AG04449 (cell line): ENCODE measurements at regions of chr11 and their contacts with region 1.

Region 1: GRCh38 chr11:64448599-64449556 is 89.9 kb downstream of the RPS6KA4 start:
- DNase-seq: no peak
- H3K4me3 ChIP-seq: peak overlapping the region; percentile 36
- CTCF ChIP-seq: peak; percentile 97

Region 2: GRCh38 chr11:64120951-64121569 is 327.8 kb before region 1 on chr11:
- CTCF ChIA-PET with region 1: no interaction called
- POLR2A ChIA-PET with region 1: no interaction called
- DNase-seq: peak; percentile 4
- H3K4me3 ChIP-seq: no peak overlapping the region
- CTCF ChIP-seq: no peak

Region 3: DNA sequence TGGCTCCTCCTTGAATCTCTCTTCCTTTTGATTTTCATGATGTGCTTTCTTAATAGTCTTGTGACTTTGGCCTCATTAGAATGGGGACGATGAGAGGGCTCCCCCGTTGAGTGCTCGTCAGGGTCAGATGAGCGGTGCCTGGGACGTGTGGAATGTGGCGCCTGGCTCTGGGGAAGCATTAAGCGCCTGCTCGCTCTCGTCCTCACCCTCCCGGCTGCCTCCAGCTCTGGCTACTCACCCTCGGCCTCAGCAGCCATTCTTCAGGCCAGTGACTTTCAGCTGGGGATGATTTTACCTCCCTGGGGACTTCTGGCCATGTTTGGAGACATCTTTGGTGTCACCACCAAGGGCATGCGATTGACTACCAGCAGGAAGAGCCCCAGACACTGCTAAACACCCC is 20.2 kb before region 1 on chr11:
- CTCF ChIA-PET with region 1: interaction called, 25 read pairs
- POLR2A ChIA-PET with region 1: no interaction called
- DNase-seq: no peak
- H3K4me3 ChIP-seq: no peak overlapping the region
- CTCF ChIP-seq: no peak

Region 4: DNA sequence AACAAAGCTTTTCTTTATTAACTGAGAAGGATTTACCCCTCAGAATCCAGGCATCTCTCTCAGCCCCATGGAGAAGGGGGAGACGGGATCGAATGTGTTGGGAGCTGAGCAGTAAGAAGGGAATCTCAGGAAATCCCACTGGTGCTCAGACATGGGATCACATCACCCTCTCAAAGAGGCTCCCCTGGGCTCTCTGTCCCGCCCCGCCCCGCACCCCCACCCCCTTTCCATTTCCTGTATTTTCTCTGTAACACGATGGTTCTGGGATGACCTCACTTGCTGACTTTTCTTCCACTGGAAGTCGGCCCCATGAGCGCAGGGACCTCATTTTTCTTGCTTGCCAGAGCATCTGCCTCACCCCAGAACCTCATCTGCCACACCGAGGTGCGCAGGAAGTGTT is 10.1 kb after region 1 on chr11:
- CTCF ChIA-PET with region 1: interaction called, 48 read pairs
- POLR2A ChIA-PET with region 1: no interaction called
- DNase-seq: no peak
- H3K4me3 ChIP-seq: no peak overlapping the region
- CTCF ChIP-seq: no peak

Region 5: GRCh38 chr11:64472593-64473455 is 23.9 kb after region 1 on chr11:
- CTCF ChIA-PET with region 1: interaction called, 21 read pairs
- POLR2A ChIA-PET with region 1: no interaction called
- DNase-seq: no peak
- H3K4me3 ChIP-seq: no peak overlapping the region
- CTCF ChIP-seq: no peak

Region 6: GRCh38 chr11:64659417-64660144 is 210.7 kb after region 1 on chr11:
- CTCF ChIA-PET with region 1: interaction called, 111 read pairs
- POLR2A ChIA-PET with region 1: no interaction called
- DNase-seq: peak; percentile 78
- H3K4me3 ChIP-seq: no peak overlapping the region
- CTCF ChIP-seq: peak; percentile 15